CD8-positive, alpha-beta T cell (primary cell): ENCODE measurements at regions of chr6 and their contacts with region 1.

Region 1: GRCh38 chr6:30483677-30484279 is 5.5 kb upstream of the HLA-E start:
- DNase-seq: peak in 3 of 9 experiments; percentile 45 to 76 (median 68)
- ATAC-seq: no peak
- H3K4me3 ChIP-seq: no peak overlapping the region
- H3K4me3 Mint-ChIP-seq: no peak overlapping the region
- H3K27ac ChIP-seq: no peak overlapping the region
- H3K27ac Mint-ChIP-seq: no peak overlapping the region
- H3K4me1 ChIP-seq: peaks cover 21% of the 10 kb centered on the region
- H3K4me1 Mint-ChIP-seq: peaks cover 34% of the 10 kb centered on the region
- H3K27me3 ChIP-seq: peaks cover 10 to 19% of the 10 kb centered on the region in 2 experiments
- H3K27me3 Mint-ChIP-seq: peaks cover 27% of the 10 kb centered on the region
- CTCF ChIP-seq: peak; percentile 91

Region 2: DNA sequence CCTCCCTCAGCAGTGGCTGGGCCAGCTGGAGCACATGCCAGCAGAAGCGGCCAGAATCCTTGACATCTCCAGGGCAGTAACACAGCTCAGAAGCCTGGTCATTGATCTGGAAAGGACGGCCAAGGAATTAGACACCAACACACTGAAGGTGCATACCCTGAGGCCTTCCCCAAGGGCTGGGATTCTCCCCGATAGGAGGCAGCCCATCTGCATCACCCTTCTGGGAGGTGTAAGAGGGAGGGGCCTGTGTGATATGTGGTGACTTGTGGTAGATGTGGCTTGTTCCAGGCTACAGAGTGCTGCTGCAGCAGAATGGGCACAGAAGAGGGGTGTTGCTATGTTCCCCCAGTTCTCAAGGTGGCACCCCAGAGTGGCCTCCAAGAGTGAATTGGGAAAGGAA is 336.7 kb before region 1 on chr6:
- CTCF ChIA-PET with region 1: no interaction called
- POLR2A ChIA-PET with region 1: no interaction called
- intact Hi-C with region 1: no loop called
- DNase-seq: no peak
- ATAC-seq: no peak
- H3K4me3 ChIP-seq: no peak overlapping the region
- H3K4me3 Mint-ChIP-seq: no peak overlapping the region
- H3K27ac ChIP-seq: no peak overlapping the region
- H3K27ac Mint-ChIP-seq: no peak overlapping the region
- H3K4me1 ChIP-seq: no peaks in the 10 kb centered on the region
- H3K4me1 Mint-ChIP-seq: no peaks in the 10 kb centered on the region
- H3K27me3 ChIP-seq: no peaks in the 10 kb centered on the region
- H3K27me3 Mint-ChIP-seq: peaks cover 35% of the 10 kb centered on the region
- CTCF ChIP-seq: no peak

Region 3: GRCh38 chr6:30508890-30509736 is 25.3 kb after region 1 on chr6:
- CTCF ChIA-PET with region 1: interaction called, 30 read pairs
- POLR2A ChIA-PET with region 1: interaction called, 5 read pairs
- intact Hi-C with region 1: no loop called
- DNase-seq: peak in 3 of 9 experiments; percentile 43 to 88 (median 78)
- ATAC-seq: peak; percentile 81
- H3K4me3 ChIP-seq: peak overlapping the region; percentile 24 to 31
- H3K4me3 Mint-ChIP-seq: peak overlapping the region; percentile 62
- H3K27ac ChIP-seq: peak overlapping the region in 1 of 2 experiments; percentile 85
- H3K27ac Mint-ChIP-seq: peak overlapping the region; percentile 82
- H3K4me1 ChIP-seq: peaks cover 68% of the 10 kb centered on the region
- H3K4me1 Mint-ChIP-seq: peaks cover 62% of the 10 kb centered on the region
- H3K27me3 ChIP-seq: no peaks in the 10 kb centered on the region
- H3K27me3 Mint-ChIP-seq: no peaks in the 10 kb centered on the region
- CTCF ChIP-seq: no peak

Region 4: GRCh38 chr6:30571075-30571768 is 87.4 kb after region 1 on chr6 and contains the start of gene ABCF1:
- CTCF ChIA-PET with region 1: interaction called, 21 read pairs
- POLR2A ChIA-PET with region 1: interaction called, 3 read pairs
- intact Hi-C with region 1: no loop called
- DNase-seq: peak; percentile 99 to 100 (median 100)
- ATAC-seq: peak; percentile 96
- H3K4me3 ChIP-seq: peak within 1 kb of the TSS; percentile 64 to 86
- H3K4me3 Mint-ChIP-seq: peak within 1 kb of the TSS; percentile 98
- H3K27ac ChIP-seq: peak within 1 kb of the TSS; percentile 90 to 98
- H3K27ac Mint-ChIP-seq: peak within 1 kb of the TSS; percentile 99
- H3K4me1 ChIP-seq: peaks cover 54% of the 10 kb centered on the region
- H3K4me1 Mint-ChIP-seq: peaks cover 69% of the 10 kb centered on the region
- H3K27me3 ChIP-seq: no peaks in the 10 kb centered on the region
- H3K27me3 Mint-ChIP-seq: no peaks in the 10 kb centered on the region
- CTCF ChIP-seq: no peak
- total RNA-seq, gene ABCF1: 121 to 130 TPM

Region 5: DNA sequence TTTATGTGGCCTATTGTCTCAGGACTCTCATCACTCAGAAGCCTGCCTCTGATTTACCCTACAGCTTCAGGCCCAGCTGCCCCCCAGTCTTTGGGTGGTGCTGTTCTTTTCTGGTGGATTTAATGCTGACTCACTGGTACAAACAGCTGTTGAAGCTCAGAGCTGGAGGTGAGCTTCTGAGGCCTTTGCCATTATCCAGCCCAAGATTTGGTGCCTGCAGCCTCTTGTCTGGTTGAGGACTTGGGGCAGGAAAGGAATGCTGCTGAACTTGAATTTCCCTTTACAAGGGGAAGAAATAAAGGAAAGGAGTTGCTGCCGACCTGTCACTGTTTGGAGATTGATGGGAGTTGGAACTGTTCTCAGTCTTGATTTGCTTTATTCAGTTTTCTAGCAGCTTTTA is 107.2 kb after region 1 on chr6:
- CTCF ChIA-PET with region 1: interaction called, 189 read pairs
- POLR2A ChIA-PET with region 1: interaction called, 3 read pairs
- intact Hi-C with region 1: no loop called
- DNase-seq: no peak
- ATAC-seq: no peak
- H3K4me3 ChIP-seq: no peak overlapping the region
- H3K4me3 Mint-ChIP-seq: no peak overlapping the region
- H3K27ac ChIP-seq: no peak overlapping the region
- H3K27ac Mint-ChIP-seq: no peak overlapping the region
- H3K4me1 ChIP-seq: no peaks in the 10 kb centered on the region
- H3K4me1 Mint-ChIP-seq: peaks cover 10% of the 10 kb centered on the region
- H3K27me3 ChIP-seq: no peaks in the 10 kb centered on the region
- H3K27me3 Mint-ChIP-seq: no peaks in the 10 kb centered on the region
- CTCF ChIP-seq: no peak

Region 6: DNA sequence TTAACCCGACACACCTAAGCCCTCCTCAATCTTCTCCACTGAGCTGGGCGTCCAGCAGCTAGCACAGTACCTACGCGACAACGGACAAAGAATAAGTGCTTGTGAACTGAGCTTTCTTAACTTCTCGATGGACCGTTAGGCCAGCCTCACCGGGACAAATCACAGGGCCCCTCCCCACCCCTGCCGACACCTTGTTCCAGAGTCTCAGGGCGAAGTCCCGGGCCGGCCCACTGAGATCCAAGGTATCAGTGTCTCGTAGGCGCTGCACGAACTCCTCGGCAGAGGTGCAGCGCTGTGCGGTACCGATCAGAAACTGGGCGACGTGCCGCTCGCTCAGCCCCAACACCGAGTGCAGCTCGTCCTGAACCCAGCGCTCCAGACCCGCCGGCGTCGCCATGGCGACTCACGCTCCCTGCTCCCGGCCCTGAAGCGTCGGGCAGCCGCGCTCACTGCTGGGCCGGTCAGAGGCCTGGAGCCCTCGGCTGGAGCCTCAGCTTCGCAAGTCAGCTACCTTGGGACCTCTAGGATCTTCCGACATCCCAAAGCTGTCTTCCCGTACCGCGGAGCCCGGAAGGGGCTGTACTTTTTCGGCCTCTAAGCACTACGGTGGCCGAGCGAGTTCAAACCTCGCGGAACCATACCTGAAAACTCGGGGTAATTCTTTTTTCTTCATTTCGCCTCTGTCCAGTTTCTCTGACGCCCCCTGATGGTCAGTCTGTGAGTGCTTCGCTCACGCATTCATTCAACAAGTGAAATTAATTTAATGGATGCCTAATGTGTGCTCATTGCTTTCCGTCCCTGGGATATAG is 188.9 kb after region 1 on chr6 and contains the start of gene DHX16:
- CTCF ChIA-PET with region 1: interaction called, 27 read pairs
- POLR2A ChIA-PET with region 1: interaction called, 5 read pairs
- intact Hi-C with region 1: loop called (anchors 1 to 2 kb)
- DNase-seq: peak; percentile 77 to 96 (median 90)
- ATAC-seq: peak; percentile 79
- H3K4me3 ChIP-seq: peak within 1 kb of the TSS; percentile 69 to 81
- H3K4me3 Mint-ChIP-seq: peak within 1 kb of the TSS; percentile 90
- H3K27ac ChIP-seq: peak within 1 kb of the TSS; percentile 51 to 71
- H3K27ac Mint-ChIP-seq: peak within 1 kb of the TSS; percentile 82
- H3K4me1 ChIP-seq: peaks cover 15% of the 10 kb centered on the region
- H3K4me1 Mint-ChIP-seq: peaks cover 38% of the 10 kb centered on the region
- H3K27me3 ChIP-seq: no peaks in the 10 kb centered on the region
- H3K27me3 Mint-ChIP-seq: no peaks in the 10 kb centered on the region
- CTCF ChIP-seq: peak; percentile 38
- total RNA-seq, gene DHX16: 15.8 to 17.9 TPM

Region 7: GRCh38 chr6:30722280-30723112 is 238.7 kb after region 1 on chr6:
- CTCF ChIA-PET with region 1: interaction called, 11 read pairs
- POLR2A ChIA-PET with region 1: interaction called, 4 read pairs
- intact Hi-C with region 1: loop called (anchors 2 kb)
- DNase-seq: peak; percentile 77 to 93 (median 87)
- ATAC-seq: no peak
- H3K4me3 ChIP-seq: peak overlapping the region; percentile 69 to 81
- H3K4me3 Mint-ChIP-seq: peak overlapping the region; percentile 90
- H3K27ac ChIP-seq: peak overlapping the region in 1 of 2 experiments; percentile 79
- H3K27ac Mint-ChIP-seq: peak overlapping the region; percentile 89
- H3K4me1 ChIP-seq: peaks cover 40% of the 10 kb centered on the region
- H3K4me1 Mint-ChIP-seq: peaks cover 63% of the 10 kb centered on the region
- H3K27me3 ChIP-seq: no peaks in the 10 kb centered on the region
- H3K27me3 Mint-ChIP-seq: no peaks in the 10 kb centered on the region
- CTCF ChIP-seq: peak; percentile 91

Region 8: DNA sequence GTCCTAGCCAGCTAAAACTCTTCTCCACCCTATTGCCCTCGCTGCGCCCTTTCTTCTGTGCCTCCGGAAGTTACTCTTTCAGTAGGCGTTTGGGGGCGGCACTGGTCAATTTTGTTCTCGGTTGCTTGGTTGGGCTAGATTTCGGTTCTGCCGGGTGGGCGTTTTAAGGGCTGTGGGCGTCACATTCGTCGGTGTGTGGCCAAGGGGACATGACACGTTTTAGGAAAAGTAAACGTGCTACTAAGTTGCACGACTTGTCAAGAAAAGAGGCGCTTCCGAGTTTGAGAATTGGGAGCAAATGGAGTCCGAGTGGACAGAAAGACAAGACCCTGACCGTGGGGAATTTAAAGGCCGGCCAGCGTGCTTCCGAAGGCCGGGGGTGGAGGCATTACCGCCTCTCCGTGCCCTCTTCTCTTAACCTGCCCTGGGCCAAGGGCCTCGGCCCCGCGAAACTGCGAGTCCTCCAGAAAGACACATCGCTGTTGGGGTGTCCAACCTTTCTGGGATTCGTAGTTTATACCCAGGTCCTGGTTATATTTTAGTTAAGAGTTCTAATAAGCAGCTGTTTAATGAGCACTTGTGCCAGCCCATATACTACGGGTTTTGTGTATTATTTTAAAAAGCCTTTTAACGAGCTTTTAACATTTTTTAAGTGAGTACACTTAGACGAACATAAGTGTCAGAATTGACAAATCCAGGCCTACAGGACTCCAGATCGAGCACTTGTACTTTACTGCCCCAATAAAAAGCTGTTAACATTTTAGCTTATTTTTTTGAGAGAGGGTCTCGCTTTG is 1169.3 kb after region 1 on chr6:
- CTCF ChIA-PET with region 1: no interaction called
- POLR2A ChIA-PET with region 1: no interaction called
- intact Hi-C with region 1: no loop called
- DNase-seq: peak in 4 of 9 experiments; percentile 77 to 92 (median 88)
- ATAC-seq: peak; percentile 70
- H3K4me3 ChIP-seq: peak overlapping the region; percentile 78 to 82
- H3K4me3 Mint-ChIP-seq: peak overlapping the region; percentile 92
- H3K27ac ChIP-seq: peak overlapping the region; percentile 94 to 96
- H3K27ac Mint-ChIP-seq: peak overlapping the region; percentile 100
- H3K4me1 ChIP-seq: peaks cover 32% of the 10 kb centered on the region
- H3K4me1 Mint-ChIP-seq: peaks cover 59% of the 10 kb centered on the region
- H3K27me3 ChIP-seq: no peaks in the 10 kb centered on the region
- H3K27me3 Mint-ChIP-seq: no peaks in the 10 kb centered on the region
- CTCF ChIP-seq: no peak